Endothelial cell of umbilical vein (primary cell): ENCODE measurements at regions of chr1 and their contacts with region 1.

Region 1: GRCh38 chr1:172357753-172358385 is 62.6 kb upstream of the C1orf105 start:
- DNase-seq: peak; percentile 76
- H3K4me3 ChIP-seq: peak overlapping the region in 1 of 3 experiments; percentile 36
- H3K27ac ChIP-seq: peak overlapping the region; percentile 95
- H3K4me1 ChIP-seq: peaks cover 48% of the 10 kb centered on the region
- H3K27me3 ChIP-seq: no peaks in the 10 kb centered on the region
- CTCF ChIP-seq: no peak
- POLR2A ChIP-seq: no peak

Region 2: GRCh38 chr1:172144445-172145061 is 213.3 kb before region 1 on chr1:
- CTCF ChIA-PET with region 1: interaction called, 4 read pairs
- POLR2A ChIA-PET with region 1: no interaction called
- dilution Hi-C with region 1: no loop called
- intact Hi-C with region 1: loop called (anchors 1 kb)
- DNase-seq: peak; percentile 76
- H3K4me3 ChIP-seq: peak overlapping the region; percentile 22 to 96 (median 38)
- H3K27ac ChIP-seq: peak overlapping the region; percentile 87
- H3K4me1 ChIP-seq: peaks cover 57% of the 10 kb centered on the region
- H3K27me3 ChIP-seq: no peaks in the 10 kb centered on the region
- CTCF ChIP-seq: no peak
- POLR2A ChIP-seq: no peak

Region 3: GRCh38 chr1:172254521-172255222 is 103.2 kb before region 1 on chr1:
- CTCF ChIA-PET with region 1: no interaction called
- POLR2A ChIA-PET with region 1: no interaction called
- dilution Hi-C with region 1: no loop called
- intact Hi-C with region 1: loop called (anchors 1 kb)
- DNase-seq: peak; percentile 72
- H3K4me3 ChIP-seq: no peak overlapping the region
- H3K27ac ChIP-seq: peak overlapping the region; percentile 99
- H3K4me1 ChIP-seq: peaks cover 20% of the 10 kb centered on the region
- H3K27me3 ChIP-seq: no peaks in the 10 kb centered on the region
- CTCF ChIP-seq: no peak
- POLR2A ChIP-seq: no peak

Region 4: DNA sequence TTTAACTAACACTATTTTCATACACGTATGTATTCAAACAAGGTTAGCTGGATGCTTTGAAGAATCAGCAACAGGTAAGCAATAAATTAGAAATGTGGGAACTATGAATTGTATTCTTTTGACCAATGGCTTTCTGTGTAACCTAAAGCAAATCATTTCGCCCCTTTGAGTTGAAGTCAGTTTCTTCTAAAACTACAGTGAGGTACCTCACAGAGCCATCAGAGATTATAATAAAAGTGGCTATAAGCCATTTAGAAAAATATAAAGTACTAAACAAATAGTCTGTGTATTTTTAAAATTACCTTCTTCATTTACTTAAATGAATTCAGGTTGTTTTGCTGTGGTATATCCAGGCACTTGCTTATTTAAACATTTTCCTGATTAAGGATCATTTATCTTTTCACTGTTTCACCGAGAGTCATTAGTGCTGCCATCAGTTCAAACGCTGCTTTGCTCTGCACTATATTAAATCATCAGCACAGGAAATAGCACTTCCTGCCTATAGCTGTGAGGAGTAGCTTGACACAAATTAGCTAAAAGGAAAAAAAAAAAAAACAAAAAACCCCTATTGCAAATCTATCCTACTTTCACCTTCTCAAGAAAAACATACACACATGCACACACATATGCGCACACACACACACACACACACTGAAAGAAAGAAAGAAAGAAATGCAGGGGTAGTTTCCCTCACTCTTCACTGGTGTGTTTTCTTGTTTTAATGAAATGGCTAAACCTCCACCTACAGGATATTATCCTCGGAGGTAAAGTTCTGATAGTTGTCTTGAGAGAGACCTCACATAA is 22.8 kb after region 1 on chr1:
- CTCF ChIA-PET with region 1: interaction called, 12 read pairs
- POLR2A ChIA-PET with region 1: no interaction called
- dilution Hi-C with region 1: no loop called
- intact Hi-C with region 1: loop called (anchors 1 kb)
- DNase-seq: peak; percentile 65
- H3K4me3 ChIP-seq: peak overlapping the region in 1 of 3 experiments; percentile 24
- H3K27ac ChIP-seq: peak overlapping the region; percentile 73
- H3K4me1 ChIP-seq: peaks cover 39% of the 10 kb centered on the region
- H3K27me3 ChIP-seq: no peaks in the 10 kb centered on the region
- CTCF ChIP-seq: no peak
- POLR2A ChIP-seq: no peak